GM12878 (cell line): ENCODE measurements at regions of chr12 and their contacts with region 1.

Region 1: DNA sequence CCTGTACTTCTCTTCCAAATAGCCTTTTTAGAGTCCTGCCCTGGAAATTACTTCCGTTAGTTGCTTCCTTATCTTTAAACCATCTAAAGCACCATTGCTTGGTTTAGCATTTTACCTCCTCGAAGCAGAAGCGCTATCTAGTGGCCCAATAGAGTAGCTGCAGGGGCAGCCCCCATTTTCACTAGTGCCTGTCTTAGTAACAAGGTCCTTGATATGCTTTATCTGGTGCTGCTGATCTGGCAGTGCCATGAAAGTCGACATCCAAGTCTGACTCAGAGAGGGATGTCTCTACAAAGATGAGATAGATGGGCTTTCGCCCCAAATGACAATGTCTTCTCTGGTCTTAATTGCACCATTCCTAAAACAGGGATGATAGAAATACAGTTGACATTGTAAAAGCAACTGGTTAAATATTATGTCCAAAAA is 25.0 kb upstream of the CIT start:
- DNase-seq: peak; percentile 33
- ATAC-seq: peak; percentile 99
- H3K4me3 ChIP-seq: no peak overlapping the region
- H3K27ac ChIP-seq: no peak overlapping the region
- H3K4me1 ChIP-seq: no peaks in the 10 kb centered on the region
- H3K27me3 ChIP-seq: no peaks in the 10 kb centered on the region
- CTCF ChIP-seq: peak; percentile 89 to 94 (median 91)
- EP300 ChIP-seq: no peak
- POLR2A ChIP-seq: no peak
- RAD21 ChIP-seq: peak; percentile 96

Region 2: GRCh38 chr12:119695034-119695433 is 207.1 kb before region 1 on chr12:
- CTCF ChIA-PET with region 1: interaction called, 8 read pairs
- POLR2A ChIA-PET with region 1: no interaction called
- RAD21 ChIA-PET with region 1: no interaction called
- SMC1A ChIA-PET with region 1: no interaction called
- in situ Hi-C with region 1: no loop called
- intact Hi-C with region 1: loop called (anchors 10 kb)
- DNase-seq: no peak
- ATAC-seq: no peak
- H3K4me3 ChIP-seq: no peak overlapping the region
- H3K27ac ChIP-seq: no peak overlapping the region
- H3K4me1 ChIP-seq: no peaks in the 10 kb centered on the region
- H3K27me3 ChIP-seq: no peaks in the 10 kb centered on the region
- CTCF ChIP-seq: peak; percentile 34 to 50 (median 44); a peak in 5 of 6 replicates
- EP300 ChIP-seq: no peak
- POLR2A ChIP-seq: no peak
- RAD21 ChIP-seq: no peak

Region 3: GRCh38 chr12:119885549-119885948 is 16.5 kb before region 1 on chr12:
- CTCF ChIA-PET with region 1: interaction called, 6 read pairs
- POLR2A ChIA-PET with region 1: interaction called, 10 read pairs
- RAD21 ChIA-PET with region 1: no interaction called
- SMC1A ChIA-PET with region 1: interaction called, 3 read pairs
- in situ Hi-C with region 1: no loop called
- intact Hi-C with region 1: no loop called
- DNase-seq: no peak
- ATAC-seq: no peak
- H3K4me3 ChIP-seq: no peak overlapping the region
- H3K27ac ChIP-seq: no peak overlapping the region
- H3K4me1 ChIP-seq: no peaks in the 10 kb centered on the region
- H3K27me3 ChIP-seq: no peaks in the 10 kb centered on the region
- CTCF ChIP-seq: no peak
- EP300 ChIP-seq: no peak
- POLR2A ChIP-seq: no peak
- RAD21 ChIP-seq: no peak

Region 4: DNA sequence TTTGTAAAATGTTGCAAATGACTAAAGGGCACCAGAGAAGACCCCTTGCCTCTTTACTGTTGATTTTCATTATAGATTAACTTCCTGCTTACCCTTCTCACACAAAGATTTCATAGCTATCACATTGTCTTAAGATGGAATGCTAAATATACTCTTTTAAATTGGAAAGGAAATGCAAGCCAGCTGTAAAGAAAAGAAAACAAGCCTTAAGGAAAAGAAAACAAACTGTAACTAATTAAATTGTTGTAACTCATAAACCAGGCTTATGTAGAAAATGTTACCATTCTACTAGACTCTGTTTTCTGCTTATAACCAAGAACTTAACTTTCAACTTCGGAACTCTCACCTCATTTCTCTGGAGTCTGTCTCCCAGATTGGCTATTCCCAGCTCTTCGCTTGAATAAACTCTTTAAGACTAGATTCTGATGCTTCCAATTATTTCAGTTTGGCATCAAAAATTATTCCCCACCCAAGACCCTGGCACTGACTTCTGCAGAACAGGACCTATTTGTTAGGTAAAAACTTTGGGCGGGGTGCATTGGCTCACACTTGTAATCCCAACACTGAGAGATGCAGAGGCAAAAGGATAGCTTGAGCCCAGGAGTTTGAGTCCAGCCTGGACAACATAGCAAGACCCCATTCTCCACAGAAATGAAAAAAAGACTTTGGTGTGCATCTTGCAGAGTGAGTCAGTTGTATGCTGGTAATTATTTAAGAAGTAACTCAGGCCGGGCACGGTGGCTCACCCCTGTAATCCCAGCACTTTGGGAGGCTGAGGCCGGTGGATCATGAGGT is 11.6 kb after region 1 on chr12:
- CTCF ChIA-PET with region 1: interaction called, 12 read pairs
- POLR2A ChIA-PET with region 1: no interaction called
- RAD21 ChIA-PET with region 1: interaction called, 3 read pairs
- SMC1A ChIA-PET with region 1: interaction called, 5 read pairs
- in situ Hi-C with region 1: no loop called
- intact Hi-C with region 1: no loop called
- DNase-seq: no peak
- ATAC-seq: no peak
- H3K4me3 ChIP-seq: no peak overlapping the region
- H3K27ac ChIP-seq: no peak overlapping the region
- H3K4me1 ChIP-seq: no peaks in the 10 kb centered on the region
- H3K27me3 ChIP-seq: no peaks in the 10 kb centered on the region
- CTCF ChIP-seq: no peak
- EP300 ChIP-seq: no peak
- POLR2A ChIP-seq: no peak
- RAD21 ChIP-seq: no peak